ENCODE measurements at regions of chr17 and their contacts with region 1.

Region 1: GRCh38 chr17:64506576-64507477 is at the start of gene CEP95:
- DNase-seq: peak; percentile 95
- H3K4me3 Mint-ChIP-seq: peak within 1 kb of the TSS; percentile 99
- H3K27ac Mint-ChIP-seq: peak within 1 kb of the TSS; percentile 100
- H3K4me1 Mint-ChIP-seq: peaks cover 56% of the 10 kb centered on the region
- H3K27me3 Mint-ChIP-seq: no peaks in the 10 kb centered on the region
- total RNA-seq, gene CEP95: 47.7 to 48.5 TPM

Region 2: DNA sequence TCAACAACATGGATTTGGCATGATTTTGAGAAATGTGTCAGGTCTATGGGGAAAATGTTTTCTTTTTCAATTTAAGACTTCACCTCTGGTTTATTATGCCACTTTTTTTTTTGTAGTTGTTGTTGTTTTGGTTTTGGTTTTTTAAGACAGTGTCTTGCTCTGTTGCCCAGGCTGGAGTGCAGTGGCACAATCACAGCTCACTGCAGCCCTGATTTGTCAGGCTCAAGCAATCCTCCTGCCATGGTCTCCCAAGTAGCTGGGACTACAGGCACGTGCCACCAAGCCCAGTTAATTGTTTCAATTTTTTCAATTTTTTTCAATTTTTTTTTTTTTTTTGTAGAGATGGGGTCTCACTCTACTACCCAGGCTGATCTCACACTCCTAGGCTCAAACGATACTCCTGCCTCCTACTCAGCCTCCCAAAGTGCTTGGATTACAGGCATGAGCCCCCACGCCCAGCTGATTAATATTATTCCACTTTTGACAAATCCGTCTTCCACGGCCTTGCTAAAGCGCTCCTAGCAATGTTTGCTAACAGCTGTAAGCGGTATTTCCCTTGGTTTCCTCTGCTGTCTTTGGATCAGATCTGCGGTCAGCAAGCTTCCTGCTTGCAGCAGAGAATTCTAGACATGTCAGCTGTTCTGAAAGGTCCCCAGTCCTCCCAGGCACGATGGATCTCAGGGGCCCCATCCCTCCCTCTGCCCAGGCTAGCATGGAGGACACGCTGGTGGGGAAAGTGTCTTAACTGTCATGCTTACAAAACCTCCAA is 64.9 kb before region 1 on chr17:
- CTCF ChIA-PET with region 1: no interaction called
- POLR2A ChIA-PET with region 1: interaction called, 22 read pairs
- DNase-seq: peak; percentile 52
- H3K4me3 Mint-ChIP-seq: peak overlapping the region; percentile 34
- H3K27ac Mint-ChIP-seq: peak overlapping the region; percentile 88
- H3K4me1 Mint-ChIP-seq: peaks cover 31% of the 10 kb centered on the region
- H3K27me3 Mint-ChIP-seq: no peaks in the 10 kb centered on the region

Region 3: DNA sequence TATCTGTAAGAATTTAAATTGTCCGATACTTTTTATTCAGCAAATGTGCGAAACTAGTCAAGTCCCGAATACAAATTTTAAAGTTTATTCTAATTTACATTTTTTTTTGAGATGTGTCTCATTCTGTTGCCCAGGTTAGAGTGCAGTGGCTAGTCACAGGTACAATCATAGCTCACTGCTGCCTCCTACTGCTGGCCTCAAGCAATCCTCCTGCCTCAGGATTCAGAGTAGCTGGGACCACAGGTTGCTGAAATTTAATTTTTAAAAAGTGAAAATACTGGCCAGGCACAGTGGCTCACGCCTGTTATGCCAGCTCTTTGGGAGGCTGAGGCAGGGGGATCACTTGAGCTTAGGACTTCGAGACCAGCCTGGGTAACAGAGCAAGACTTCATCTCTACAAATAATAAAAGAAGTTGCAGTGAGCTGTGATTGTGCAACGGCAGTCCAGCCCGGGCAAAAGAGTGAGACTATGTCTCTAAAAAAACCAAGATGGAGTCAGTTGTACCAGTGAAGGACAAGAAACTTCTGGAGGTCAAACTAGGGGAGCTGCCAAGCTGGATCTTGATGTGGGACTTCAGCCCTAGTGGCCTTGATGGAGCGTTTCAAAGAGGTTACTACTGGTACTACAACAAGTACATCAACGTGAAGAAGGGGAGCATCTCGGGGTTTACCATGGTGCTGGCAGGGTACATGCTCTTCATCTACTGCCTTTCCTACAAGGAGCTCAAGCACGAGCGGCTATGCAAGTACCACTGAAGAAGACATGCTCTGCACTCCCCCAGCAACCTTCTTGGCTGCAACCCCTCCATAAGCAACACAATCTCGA is 15.6 kb before region 1 on chr17:
- CTCF ChIA-PET with region 1: interaction called, 52 read pairs
- POLR2A ChIA-PET with region 1: interaction called, 387 read pairs
- DNase-seq: peak; percentile 73
- H3K4me3 Mint-ChIP-seq: no peak overlapping the region
- H3K27ac Mint-ChIP-seq: no peak overlapping the region
- H3K4me1 Mint-ChIP-seq: peaks cover 42% of the 10 kb centered on the region
- H3K27me3 Mint-ChIP-seq: no peaks in the 10 kb centered on the region

Region 4: GRCh38 chr17:64572638-64573154 is 65.9 kb after region 1 on chr17:
- CTCF ChIA-PET with region 1: no interaction called
- POLR2A ChIA-PET with region 1: interaction called, 11 read pairs
- DNase-seq: no peak
- H3K4me3 Mint-ChIP-seq: no peak overlapping the region
- H3K27ac Mint-ChIP-seq: peak overlapping the region; percentile 77
- H3K4me1 Mint-ChIP-seq: peaks cover 13% of the 10 kb centered on the region
- H3K27me3 Mint-ChIP-seq: no peaks in the 10 kb centered on the region

Region 5: DNA sequence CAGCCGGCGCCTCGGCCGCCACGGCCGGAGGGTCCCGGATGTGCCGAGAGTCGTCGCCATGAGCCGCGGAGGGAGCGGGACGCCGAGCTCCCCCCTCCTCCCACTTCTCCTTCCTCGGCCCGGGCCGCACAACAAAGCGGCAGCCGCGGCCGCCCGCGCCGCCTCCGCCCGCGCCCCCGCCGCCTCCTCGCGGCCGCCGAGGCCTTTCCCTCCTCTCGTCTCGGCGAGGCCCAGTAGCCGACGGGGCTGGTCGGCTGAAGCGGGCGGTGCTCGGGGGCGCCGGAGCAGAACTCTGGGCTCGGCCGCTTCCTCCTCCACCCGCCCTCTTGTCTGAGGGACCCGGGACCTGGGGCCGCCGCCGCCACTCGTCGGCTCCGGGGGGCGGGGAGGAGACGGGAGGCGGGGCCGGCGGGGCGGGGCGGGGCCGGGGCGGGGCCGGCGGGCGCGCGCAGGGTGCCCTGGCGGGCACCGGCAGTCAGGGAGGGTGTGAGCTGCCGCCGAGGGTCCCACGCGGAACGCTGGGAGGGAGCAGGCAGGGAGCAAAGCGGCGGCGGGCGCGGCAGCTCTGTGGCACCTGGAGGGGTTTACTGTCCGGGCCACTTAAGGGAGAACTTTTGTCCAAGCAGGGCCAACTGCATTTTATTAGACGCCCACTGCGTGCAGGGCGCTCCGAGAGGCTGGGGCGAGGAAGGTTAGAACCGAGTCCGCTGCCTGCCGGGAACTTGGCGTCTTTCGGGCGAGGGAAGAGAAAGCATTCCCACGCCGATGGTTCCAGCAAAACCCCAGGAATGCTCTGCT is 155.3 kb after region 1 on chr17 and contains the start of gene SMURF2:
- CTCF ChIA-PET with region 1: interaction called, 3 read pairs
- POLR2A ChIA-PET with region 1: interaction called, 26 read pairs
- DNase-seq: peak; percentile 83
- H3K4me3 Mint-ChIP-seq: peak within 1 kb of the TSS; percentile 92
- H3K27ac Mint-ChIP-seq: peak within 1 kb of the TSS; percentile 83
- H3K4me1 Mint-ChIP-seq: peaks cover 28% of the 10 kb centered on the region
- H3K27me3 Mint-ChIP-seq: no peaks in the 10 kb centered on the region
- total RNA-seq, gene SMURF2: 14.6 to 14.8 TPM

Measured in activated CD4-positive, alpha-beta memory T cell treated with anti-CD3 and anti-CD28 coated beads, Interleukin-2, amount 10 ng/mL, durations not matched to agents 7 days and 5 days (primary cell).